ENCODE measurements at regions of chr12 and their contacts with region 1.

Region 1: DNA sequence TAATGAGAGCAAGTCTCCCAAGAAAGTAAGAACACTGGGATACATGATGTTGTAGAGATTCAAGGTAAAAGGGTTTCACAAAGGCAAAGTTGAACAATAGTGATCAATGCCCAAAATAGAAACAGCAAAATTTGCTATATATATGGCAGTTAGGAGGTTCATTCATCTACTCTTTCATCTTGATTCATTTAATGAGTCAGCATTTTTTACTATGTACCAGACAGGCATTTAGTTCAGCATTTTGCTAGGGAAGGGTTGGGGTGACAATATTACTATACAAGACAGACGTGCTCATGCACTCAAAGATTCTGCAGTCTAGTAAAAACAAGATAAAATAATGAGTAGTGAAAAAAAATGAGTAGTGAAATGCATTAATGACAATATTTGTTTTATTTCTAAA is 264.9 kb upstream of the LMO3 start:
- DNase-seq: no peak
- H3K4me3 ChIP-seq: no peak overlapping the region
- H3K27ac ChIP-seq: no peak overlapping the region
- H3K4me1 ChIP-seq: no peaks in the 10 kb centered on the region
- CTCF ChIP-seq: no peak

Region 2: GRCh38 chr12:16880864-16881285 is 10.0 kb after region 1 on chr12:
- CTCF ChIA-PET with region 1: no interaction called
- POLR2A ChIA-PET with region 1: interaction called, 11 read pairs
- intact Hi-C with region 1: no loop called
- DNase-seq: no peak
- H3K4me3 ChIP-seq: no peak overlapping the region
- H3K27ac ChIP-seq: no peak overlapping the region
- H3K4me1 ChIP-seq: no peaks in the 10 kb centered on the region
- CTCF ChIP-seq: no peak